Activated naive CD4-positive, alpha-beta T cell treated with anti-CD3 and anti-CD28 coated beads for 36 hours (primary cell): ENCODE measurements at regions of chr19 and their contacts with region 1.

Region 1: GRCh38 chr19:42268704-42269477 is at the start of gene CIC:
- DNase-seq: peak; percentile 100
- H3K4me3 Mint-ChIP-seq: no peak within 1 kb of the TSS
- H3K27ac Mint-ChIP-seq: peak within 1 kb of the TSS; percentile 99
- H3K4me1 Mint-ChIP-seq: peaks cover 30% of the 10 kb centered on the region
- H3K27me3 Mint-ChIP-seq: no peaks in the 10 kb centered on the region
- total RNA-seq, gene CIC: 60.2 to 61.5 TPM

Region 2: GRCh38 chr19:42075616-42076379 is 193.1 kb before region 1 on chr19 and contains the start of gene ZNF574:
- CTCF ChIA-PET with region 1: no interaction called
- intact Hi-C with region 1: loop called (anchors 1 kb)
- DNase-seq: peak; percentile 99
- H3K4me3 Mint-ChIP-seq: peak within 1 kb of the TSS; percentile 97
- H3K27ac Mint-ChIP-seq: peak within 1 kb of the TSS; percentile 96
- H3K4me1 Mint-ChIP-seq: peaks cover 22% of the 10 kb centered on the region
- H3K27me3 Mint-ChIP-seq: no peaks in the 10 kb centered on the region
- total RNA-seq, gene ZNF574: 8.4 to 8.8 TPM

Region 3: DNA sequence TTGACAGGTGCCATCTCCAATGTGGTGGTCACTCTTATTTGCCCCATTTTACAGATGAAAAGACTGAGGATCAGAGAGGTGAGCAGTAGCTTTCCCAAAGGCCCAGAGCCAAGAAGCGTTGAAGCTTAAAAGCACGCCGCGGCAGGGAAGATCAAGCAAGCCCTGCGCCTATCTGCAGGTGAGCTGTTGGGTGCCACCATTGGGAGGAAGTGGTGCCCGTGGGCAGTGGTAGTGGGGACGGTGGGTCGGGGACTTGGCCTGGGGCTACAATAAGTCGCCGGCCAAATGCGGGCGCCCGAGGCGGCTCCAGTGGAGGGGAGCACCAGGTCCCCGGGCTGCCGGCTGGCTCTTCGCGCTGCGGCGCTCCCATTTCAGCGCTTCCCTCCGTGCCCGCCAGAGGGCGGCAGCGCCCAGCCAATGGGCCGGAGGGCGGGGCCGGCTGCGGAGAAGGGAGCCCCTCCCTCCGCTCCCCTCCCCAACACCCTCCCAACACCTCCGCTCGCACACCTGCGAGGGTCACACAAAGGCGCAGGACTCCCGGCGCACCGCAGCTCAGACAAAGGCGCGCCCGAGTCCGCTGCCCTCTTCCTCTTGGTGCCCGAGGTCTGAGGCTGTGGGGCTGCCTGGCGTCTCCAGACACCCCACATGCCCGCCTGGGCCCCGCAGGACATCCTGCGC is 135.9 kb before region 1 on chr19:
- CTCF ChIA-PET with region 1: no interaction called
- intact Hi-C with region 1: no loop called
- DNase-seq: peak; percentile 79
- H3K4me3 Mint-ChIP-seq: peak overlapping the region; percentile 79
- H3K27ac Mint-ChIP-seq: peak overlapping the region; percentile 86
- H3K4me1 Mint-ChIP-seq: peaks cover 58% of the 10 kb centered on the region
- H3K27me3 Mint-ChIP-seq: no peaks in the 10 kb centered on the region

Region 4: DNA sequence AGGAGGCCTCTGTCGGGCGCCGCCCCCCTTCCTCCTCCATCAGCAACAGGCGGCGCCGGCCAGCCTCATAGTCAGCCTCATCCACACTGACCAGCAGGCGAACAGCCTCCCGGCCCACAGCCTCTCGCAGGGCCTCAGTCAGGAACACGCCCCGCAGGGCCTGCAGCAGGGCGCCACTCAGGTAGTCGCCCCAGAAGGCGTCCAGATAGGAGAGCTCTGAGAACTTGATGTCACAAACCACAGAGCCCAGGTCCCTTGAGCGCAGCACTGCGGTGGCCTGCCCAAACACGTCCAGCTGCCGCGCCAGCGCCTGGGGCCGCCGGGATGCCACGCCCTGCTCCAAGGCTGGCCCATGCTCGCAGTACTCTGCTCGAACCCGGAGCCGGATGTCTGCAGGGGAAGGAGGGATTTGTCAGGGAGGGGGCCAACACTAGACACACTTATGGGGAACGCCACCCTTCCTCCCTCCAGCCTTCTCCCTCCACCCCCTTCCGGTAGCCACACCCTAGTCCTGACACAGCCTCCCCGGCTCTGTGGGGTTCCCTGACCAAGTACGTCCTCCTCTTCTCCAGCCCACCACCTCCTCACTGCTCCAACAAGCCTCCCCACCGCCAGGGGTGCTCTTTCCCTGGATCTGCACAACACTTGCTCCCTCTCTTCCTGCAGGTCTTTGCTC is 69.3 kb before region 1 on chr19:
- CTCF ChIA-PET with region 1: no interaction called
- intact Hi-C with region 1: loop called (anchors 1 kb)
- DNase-seq: peak; percentile 88
- H3K4me3 Mint-ChIP-seq: peak overlapping the region; percentile 58
- H3K27ac Mint-ChIP-seq: peak overlapping the region; percentile 96
- H3K4me1 Mint-ChIP-seq: peaks cover 79% of the 10 kb centered on the region
- H3K27me3 Mint-ChIP-seq: no peaks in the 10 kb centered on the region

Region 5: GRCh38 chr19:42254989-42255765 is 13.7 kb before region 1 on chr19 and contains the start of gene ERF:
- CTCF ChIA-PET with region 1: interaction called, 3 read pairs
- intact Hi-C with region 1: loop called (anchors 1 kb)
- DNase-seq: peak; percentile 93
- H3K4me3 Mint-ChIP-seq: peak within 1 kb of the TSS; percentile 73
- H3K27ac Mint-ChIP-seq: peak within 1 kb of the TSS; percentile 78
- H3K4me1 Mint-ChIP-seq: peaks cover 29% of the 10 kb centered on the region
- H3K27me3 Mint-ChIP-seq: no peaks in the 10 kb centered on the region
- total RNA-seq, gene ERF: 52.4 to 55.6 TPM

Region 6: DNA sequence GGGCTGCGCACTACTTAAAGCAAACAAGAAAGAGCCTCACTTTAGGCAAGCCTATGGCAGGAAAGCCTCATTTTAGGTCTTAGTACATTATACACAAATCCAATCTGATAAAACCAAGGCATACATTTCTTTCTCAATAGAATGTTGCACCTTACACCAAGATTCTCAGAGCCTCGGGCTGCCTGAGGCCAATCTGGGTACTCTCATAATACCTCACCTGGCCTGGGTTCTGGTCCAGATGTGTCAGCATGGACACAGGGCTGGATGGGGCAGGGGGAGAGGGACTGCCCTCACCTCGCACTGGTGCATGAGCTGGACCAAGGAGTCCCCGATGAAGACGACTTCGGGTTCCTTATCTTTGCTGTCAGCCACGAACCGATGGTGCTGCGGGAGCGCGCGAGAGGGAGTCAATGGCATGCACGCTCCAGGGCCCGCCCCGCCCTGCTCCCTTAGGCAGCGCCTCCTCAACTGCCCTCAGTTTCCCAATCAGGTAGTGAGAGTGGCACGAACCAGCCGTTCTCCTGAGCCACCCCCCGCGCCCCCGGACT is 32.8 kb after region 1 on chr19 and contains the start of gene PRR19:
- CTCF ChIA-PET with region 1: no interaction called
- intact Hi-C with region 1: loop called (anchors 1 kb)
- DNase-seq: no peak
- H3K4me3 Mint-ChIP-seq: peak within 1 kb of the TSS; percentile 85
- H3K27ac Mint-ChIP-seq: peak within 1 kb of the TSS; percentile 85
- H3K4me1 Mint-ChIP-seq: peaks cover 19% of the 10 kb centered on the region
- H3K27me3 Mint-ChIP-seq: no peaks in the 10 kb centered on the region
- total RNA-seq, gene PRR19: 0.27 to 0.43 TPM

Region 7: GRCh38 chr19:42396381-42397262 is 127.7 kb after region 1 on chr19:
- CTCF ChIA-PET with region 1: no interaction called
- intact Hi-C with region 1: loop called (anchors 1 kb)
- DNase-seq: peak; percentile 98
- H3K4me3 Mint-ChIP-seq: peak overlapping the region; percentile 89
- H3K27ac Mint-ChIP-seq: peak overlapping the region; percentile 88
- H3K4me1 Mint-ChIP-seq: peaks cover 32% of the 10 kb centered on the region
- H3K27me3 Mint-ChIP-seq: no peaks in the 10 kb centered on the region